K562 (cell line): ENCODE measurements at regions of chr9 and their contacts with region 1.

Region 1: DNA sequence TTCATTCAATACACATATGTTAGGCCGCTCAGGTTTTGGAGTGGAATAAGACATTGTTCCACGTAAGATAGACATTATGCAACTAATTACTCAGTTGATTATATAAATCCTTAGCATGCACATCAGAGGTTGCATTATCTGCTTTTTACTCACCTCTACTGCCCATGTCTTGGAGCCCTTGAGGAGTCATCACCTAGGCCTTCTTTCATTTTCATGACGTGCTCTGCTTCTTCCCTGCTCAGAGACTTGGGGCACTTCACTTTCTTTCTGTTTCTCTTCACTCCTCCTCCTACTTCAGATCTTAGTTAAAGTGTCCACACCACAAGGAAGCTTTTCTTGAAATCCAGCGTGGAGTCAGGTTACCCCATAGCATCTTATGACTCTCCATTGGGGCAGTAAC is 241.1 kb downstream of the TLR4 start:
- DNase-seq: no peak
- ATAC-seq: no peak
- H3K4me3 ChIP-seq: no peak overlapping the region
- H3K27ac ChIP-seq: no peak overlapping the region
- H3K4me1 ChIP-seq: no peaks in the 10 kb centered on the region
- H3K27me3 ChIP-seq: no peaks in the 10 kb centered on the region
- CTCF ChIP-seq: no peak
- EP300 ChIP-seq: no peak
- POLR2A ChIP-seq: no peak
- RAD21 ChIP-seq: no peak

Region 2: DNA sequence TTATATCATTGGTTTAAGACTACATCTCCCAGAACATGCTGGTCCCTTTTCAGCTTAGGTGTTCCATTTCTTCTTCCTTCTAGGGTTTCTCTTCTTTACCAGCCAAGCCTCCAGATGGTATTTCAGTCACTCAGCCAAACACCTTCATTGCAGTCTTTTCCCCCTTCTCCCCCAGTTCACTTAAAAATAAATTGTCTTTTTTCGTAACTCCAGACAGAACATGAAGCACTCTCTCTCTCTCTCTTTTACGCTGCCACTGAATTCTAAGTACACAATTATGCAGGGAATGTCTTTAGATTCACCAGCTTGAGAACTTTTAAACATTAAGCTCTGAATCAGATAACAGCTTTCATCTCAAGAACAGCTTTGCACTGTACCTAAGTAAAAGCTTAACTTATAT is 1843.6 kb after region 1 on chr9:
- CTCF ChIA-PET with region 1: no interaction called
- POLR2A ChIA-PET with region 1: no interaction called
- in situ Hi-C with region 1: loop called (anchors 10 kb)
- intact Hi-C with region 1: no loop called
- DNase-seq: no peak
- ATAC-seq: no peak
- H3K4me3 ChIP-seq: no peak overlapping the region
- H3K27ac ChIP-seq: no peak overlapping the region
- H3K4me1 ChIP-seq: no peaks in the 10 kb centered on the region
- H3K27me3 ChIP-seq: no peaks in the 10 kb centered on the region
- CTCF ChIP-seq: no peak
- EP300 ChIP-seq: no peak
- POLR2A ChIP-seq: no peak
- RAD21 ChIP-seq: no peak